Endothelial cell of umbilical vein (primary cell): ENCODE measurements at regions of chr16 and their contacts with region 1.

Region 1: GRCh38 chr16:67892899-67893742 is at the start of gene PSKH1:
- DNase-seq: peak; percentile 97
- H3K4me3 ChIP-seq: peak within 1 kb of the TSS; percentile 10 to 73 (median 73)
- H3K27ac ChIP-seq: peak within 1 kb of the TSS; percentile 76
- H3K4me1 ChIP-seq: peaks cover 21% of the 10 kb centered on the region
- H3K27me3 ChIP-seq: no peaks in the 10 kb centered on the region
- CTCF ChIP-seq: no peak
- POLR2A ChIP-seq: peak; percentile 59
- total RNA-seq, gene PSKH1: 25.9 and 27.0 TPM in 2 replicates

Region 2: DNA sequence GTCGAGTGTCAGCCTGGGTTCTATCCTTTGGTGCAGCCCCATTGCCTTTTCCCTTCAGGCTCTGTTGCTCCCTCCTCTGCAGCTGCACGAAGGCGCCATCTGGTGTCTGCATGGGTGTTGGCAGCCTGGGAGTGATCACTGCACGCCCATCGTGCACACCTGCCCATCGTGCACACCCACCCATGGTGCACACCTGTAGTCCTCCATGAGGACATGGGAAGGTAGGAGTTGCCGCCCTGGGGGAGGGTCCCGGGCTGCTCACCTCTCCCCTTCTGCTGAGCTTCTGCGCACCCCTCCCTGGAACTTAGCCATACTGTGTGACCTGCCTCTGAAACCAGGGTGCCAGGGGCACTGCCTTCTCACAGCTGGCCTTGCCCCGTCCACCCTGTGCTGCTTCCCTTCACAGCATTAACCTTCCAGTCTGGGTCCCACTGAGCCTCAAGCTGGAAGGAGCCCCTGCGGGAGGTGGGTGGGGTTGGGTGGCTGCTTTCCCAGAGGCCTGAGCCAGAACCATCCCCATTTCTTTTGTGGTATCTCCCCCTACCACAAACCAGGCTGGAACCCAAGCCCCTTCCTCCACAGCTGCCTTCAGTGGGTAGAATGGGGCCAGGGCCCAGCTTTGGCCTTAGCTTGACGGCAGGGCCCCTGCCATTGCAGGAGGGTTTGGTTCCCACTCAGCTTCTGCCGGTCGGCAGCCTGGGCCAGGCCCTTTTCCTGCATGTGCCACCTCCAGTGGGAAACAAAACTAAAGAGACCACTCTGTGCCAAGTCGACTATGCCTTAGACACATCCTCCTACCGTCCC is 35.6 kb after region 1 on chr16:
- CTCF ChIA-PET with region 1: interaction called, 11 read pairs
- POLR2A ChIA-PET with region 1: no interaction called
- dilution Hi-C with region 1: no loop called
- intact Hi-C with region 1: no loop called
- DNase-seq: peak; percentile 50
- H3K4me3 ChIP-seq: no peak overlapping the region
- H3K27ac ChIP-seq: no peak overlapping the region
- H3K4me1 ChIP-seq: peaks cover 10% of the 10 kb centered on the region
- H3K27me3 ChIP-seq: no peaks in the 10 kb centered on the region
- CTCF ChIP-seq: peak; percentile 87 to 93
- POLR2A ChIP-seq: no peak

Region 3: DNA sequence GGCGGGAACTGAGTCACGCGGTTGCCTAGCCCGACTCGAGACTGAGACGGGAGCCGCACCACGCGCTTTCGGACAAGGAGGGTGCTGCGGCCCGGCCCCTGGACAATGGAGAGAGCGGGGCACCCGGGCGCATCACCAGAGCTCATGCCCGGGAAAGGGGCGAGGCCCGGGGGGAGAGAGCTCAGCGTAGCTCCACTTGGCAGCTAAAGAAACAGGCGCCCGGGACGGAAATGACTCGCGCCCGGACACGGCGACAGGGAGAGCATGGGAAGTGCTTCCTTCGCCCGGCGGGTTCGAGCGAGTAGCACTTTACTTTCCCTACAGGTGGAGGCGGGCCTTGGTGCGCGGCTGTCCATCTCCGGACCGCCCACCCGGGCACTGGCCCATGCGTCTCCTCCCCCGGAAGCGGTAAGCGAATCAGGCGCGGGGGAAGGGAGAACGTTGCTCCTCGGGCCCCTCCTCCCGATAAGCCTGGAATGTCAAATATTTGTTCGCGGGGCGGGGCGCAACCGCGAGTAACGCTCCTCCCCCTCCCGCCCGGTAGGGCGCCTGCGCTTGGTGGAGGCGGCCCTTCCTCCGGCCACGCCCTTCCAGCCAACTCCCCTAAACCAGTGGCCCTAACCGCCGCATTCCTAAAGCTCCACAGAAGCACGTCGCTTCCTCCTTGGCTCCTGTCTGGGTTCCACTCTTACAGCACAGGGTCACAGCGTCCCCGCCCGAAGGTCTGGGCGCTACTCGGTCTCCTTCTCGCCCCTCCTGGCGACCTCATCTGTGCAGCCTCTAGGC is 344.3 kb after region 1 on chr16:
- CTCF ChIA-PET with region 1: no interaction called
- POLR2A ChIA-PET with region 1: no interaction called
- dilution Hi-C with region 1: no loop called
- intact Hi-C with region 1: loop called (anchors 2 kb)
- DNase-seq: peak; percentile 98
- H3K4me3 ChIP-seq: peak overlapping the region in 2 of 3 experiments; percentile 42 to 43
- H3K27ac ChIP-seq: peak overlapping the region; percentile 93
- H3K4me1 ChIP-seq: peaks cover 13% of the 10 kb centered on the region
- H3K27me3 ChIP-seq: no peaks in the 10 kb centered on the region
- CTCF ChIP-seq: no peak
- POLR2A ChIP-seq: peak; percentile 99